H1 (cell line): ENCODE measurements at regions of chr17 and their contacts with region 1.

Region 1: DNA sequence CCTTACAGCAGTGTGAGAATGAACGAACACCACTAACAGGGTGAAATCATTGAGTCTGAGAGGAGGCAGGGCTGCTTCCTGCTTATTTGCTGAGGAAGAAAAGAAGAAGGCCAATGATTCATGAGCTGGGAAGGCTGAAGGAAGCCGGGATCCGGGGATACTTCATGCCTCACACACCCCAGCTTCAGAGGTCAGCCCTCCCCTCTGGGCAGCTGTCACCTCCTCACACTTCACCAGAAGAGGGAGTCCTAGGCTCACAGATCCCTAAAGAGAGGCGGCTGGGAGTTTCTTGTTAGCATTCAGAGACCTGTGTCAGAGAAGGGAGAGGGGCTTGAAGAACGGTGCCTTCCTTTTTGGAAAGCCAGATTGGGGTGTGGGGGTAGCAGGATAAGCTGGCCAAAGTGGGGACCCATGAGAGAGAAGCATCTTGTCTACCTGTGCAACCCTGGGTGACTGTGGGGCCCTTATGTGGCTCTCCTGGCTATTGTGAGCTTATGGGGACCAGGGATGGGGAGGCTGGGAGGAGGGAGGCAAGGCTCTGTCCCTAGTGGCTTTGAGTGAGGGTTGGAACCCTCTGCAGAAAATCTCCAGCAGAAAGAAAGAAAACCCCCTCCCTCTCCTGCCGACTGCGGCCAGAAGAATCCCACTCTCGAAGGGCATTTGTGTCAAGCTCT is 94.6 kb downstream of the RGS9 start:
- DNase-seq: peak; percentile 70 to 77
- H3K4me3 ChIP-seq: no peak overlapping the region
- H3K27ac ChIP-seq: no peak overlapping the region
- H3K4me1 ChIP-seq: no peaks in the 10 kb centered on the region
- H3K27me3 ChIP-seq: no peaks in the 10 kb centered on the region
- CTCF ChIP-seq: peak; percentile 79 to 89 (median 80)
- EP300 ChIP-seq: no peak
- POLR2A ChIP-seq: no peak
- RAD21 ChIP-seq: peak; percentile 98 to 99

Region 2: DNA sequence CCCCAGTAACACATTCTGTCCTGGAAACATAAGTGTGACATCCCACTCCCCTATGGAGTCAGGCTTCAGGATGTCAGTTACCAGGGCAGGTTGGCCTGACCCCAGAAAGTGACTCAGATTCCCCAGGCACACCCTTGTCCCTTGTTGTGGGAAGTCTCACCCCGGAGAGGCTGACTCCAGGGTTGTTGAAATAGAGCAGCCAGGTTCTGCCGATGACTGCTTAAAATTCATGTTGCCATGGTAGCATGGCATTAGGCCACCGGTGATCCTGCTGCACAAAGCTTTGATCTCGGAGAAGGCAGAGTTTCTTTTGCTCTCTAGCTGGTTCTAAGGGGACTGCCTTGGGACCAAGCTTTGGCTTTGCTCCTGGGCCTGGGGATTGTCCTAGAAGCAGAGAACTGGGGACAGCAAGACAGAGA is 12.0 kb after region 1 on chr17:
- CTCF ChIA-PET with region 1: interaction called, 18 read pairs
- POLR2A ChIA-PET with region 1: no interaction called
- DNase-seq: no peak
- H3K4me3 ChIP-seq: no peak overlapping the region
- H3K27ac ChIP-seq: no peak overlapping the region
- H3K4me1 ChIP-seq: peaks cover 0 to 8% (median 5%) of the 10 kb centered on the region in 4 experiments; a peak in 4 of 7 replicates
- H3K27me3 ChIP-seq: no peaks in the 10 kb centered on the region
- CTCF ChIP-seq: no peak
- EP300 ChIP-seq: no peak
- POLR2A ChIP-seq: no peak
- RAD21 ChIP-seq: no peak

Region 3: GRCh38 chr17:65261682-65262636 is 30.2 kb after region 1 on chr17:
- CTCF ChIA-PET with region 1: interaction called, 11 read pairs
- POLR2A ChIA-PET with region 1: no interaction called
- DNase-seq: no peak
- H3K4me3 ChIP-seq: no peak overlapping the region
- H3K27ac ChIP-seq: no peak overlapping the region
- H3K4me1 ChIP-seq: no peaks in the 10 kb centered on the region
- H3K27me3 ChIP-seq: no peaks in the 10 kb centered on the region
- CTCF ChIP-seq: no peak
- EP300 ChIP-seq: no peak
- POLR2A ChIP-seq: no peak
- RAD21 ChIP-seq: no peak

Region 4: DNA sequence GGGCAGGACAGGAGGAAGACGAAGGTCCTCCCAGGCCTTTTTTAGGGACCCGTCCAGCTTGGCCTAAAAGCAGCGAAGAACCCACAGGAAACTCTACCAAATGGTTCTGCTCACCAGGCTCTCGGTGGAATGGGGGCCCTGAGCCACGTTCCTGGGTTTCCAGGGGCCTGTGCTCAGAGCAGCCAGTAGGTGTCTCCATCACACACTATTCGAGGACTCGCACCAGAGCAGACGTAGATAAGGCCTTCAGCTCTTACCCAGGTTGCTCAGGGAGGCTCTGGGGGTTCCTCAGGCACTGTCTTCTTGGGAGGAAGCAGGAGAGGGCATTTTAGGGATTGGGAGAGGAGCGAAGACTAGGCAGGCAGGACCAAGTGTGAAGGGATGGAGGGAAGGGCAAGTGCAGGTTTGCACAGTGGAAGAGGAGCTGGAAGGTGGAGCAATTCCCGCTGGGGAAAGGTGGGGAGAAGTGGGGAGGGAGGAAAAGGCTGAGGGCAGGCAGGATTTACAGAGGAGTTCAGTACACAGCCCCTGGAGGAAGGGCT is 62.5 kb after region 1 on chr17:
- CTCF ChIA-PET with region 1: interaction called, 16 read pairs
- POLR2A ChIA-PET with region 1: no interaction called
- DNase-seq: peak; percentile 34 to 77
- H3K4me3 ChIP-seq: no peak overlapping the region
- H3K27ac ChIP-seq: no peak overlapping the region
- H3K4me1 ChIP-seq: peaks cover 0 to 10% (median 7%) of the 10 kb centered on the region in 4 experiments; a peak in 5 of 7 replicates
- H3K27me3 ChIP-seq: no peaks in the 10 kb centered on the region
- CTCF ChIP-seq: peak; percentile 80 to 96 (median 83)
- EP300 ChIP-seq: no peak
- POLR2A ChIP-seq: no peak
- RAD21 ChIP-seq: peak; percentile 86 to 93

Region 5: DNA sequence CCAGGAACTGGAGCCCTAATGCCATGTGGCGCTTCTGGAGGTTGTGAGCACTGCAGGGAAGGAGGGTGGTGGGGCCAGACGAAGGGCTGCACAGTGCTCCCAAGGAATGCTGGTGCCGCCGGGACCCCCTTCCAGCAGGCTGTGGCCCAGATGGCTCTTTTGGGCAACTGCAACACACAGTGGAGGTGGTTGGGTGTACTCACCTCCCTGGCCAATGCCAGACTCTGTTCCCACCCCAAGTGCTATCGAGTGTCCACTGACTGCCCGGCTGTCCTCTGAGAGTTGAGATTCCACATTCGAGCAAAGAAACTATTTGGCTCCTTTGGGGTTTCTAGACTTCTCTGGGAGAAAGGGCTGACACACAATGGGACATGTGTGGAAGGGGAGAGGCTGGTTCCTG is 73.3 kb after region 1 on chr17:
- CTCF ChIA-PET with region 1: no interaction called
- POLR2A ChIA-PET with region 1: no interaction called
- DNase-seq: no peak
- H3K4me3 ChIP-seq: no peak overlapping the region
- H3K27ac ChIP-seq: no peak overlapping the region
- H3K4me1 ChIP-seq: no peaks in the 10 kb centered on the region
- H3K27me3 ChIP-seq: no peaks in the 10 kb centered on the region
- CTCF ChIP-seq: no peak
- EP300 ChIP-seq: no peak
- POLR2A ChIP-seq: no peak
- RAD21 ChIP-seq: no peak

Region 6: DNA sequence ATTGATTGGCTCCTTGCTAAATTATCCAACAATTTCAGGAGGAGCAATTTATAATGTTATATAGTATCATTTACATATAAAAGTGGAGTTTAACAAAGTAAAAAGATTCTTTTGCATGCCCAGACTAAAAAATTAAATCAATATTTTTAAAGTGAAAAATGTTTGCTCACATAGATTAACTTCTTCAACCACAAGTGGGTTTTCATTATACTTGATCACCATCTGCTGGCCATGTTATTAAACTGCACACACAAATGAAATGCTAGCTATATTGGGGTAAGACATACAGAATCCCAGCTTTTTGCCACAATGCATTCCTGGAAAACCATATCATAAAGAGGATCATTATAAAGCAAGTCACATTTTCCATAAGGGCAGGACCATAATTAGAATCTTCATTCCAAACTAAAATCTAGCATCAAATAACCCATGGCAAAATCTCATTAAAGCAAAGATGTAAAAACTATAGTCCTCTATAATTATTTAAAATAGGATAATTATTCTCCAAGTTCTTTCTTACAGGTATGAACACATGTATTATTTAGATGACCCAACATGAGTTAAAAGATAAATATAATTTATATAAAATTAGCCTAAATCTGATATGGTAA is 933.8 kb after region 1 on chr17:
- CTCF ChIA-PET with region 1: interaction called, 23 read pairs
- POLR2A ChIA-PET with region 1: no interaction called
- DNase-seq: no peak
- H3K4me3 ChIP-seq: no peak overlapping the region
- H3K27ac ChIP-seq: no peak overlapping the region
- H3K4me1 ChIP-seq: no peaks in the 10 kb centered on the region
- H3K27me3 ChIP-seq: no peaks in the 10 kb centered on the region
- CTCF ChIP-seq: peak in 2 of 3 experiments; percentile 35 to 64; a peak in 2 of 4 replicates
- EP300 ChIP-seq: no peak
- POLR2A ChIP-seq: no peak
- RAD21 ChIP-seq: peak; percentile 88 to 89